Caco-2 (cell line): ENCODE measurements at regions of chr4 and their contacts with region 1.

Region 1: DNA sequence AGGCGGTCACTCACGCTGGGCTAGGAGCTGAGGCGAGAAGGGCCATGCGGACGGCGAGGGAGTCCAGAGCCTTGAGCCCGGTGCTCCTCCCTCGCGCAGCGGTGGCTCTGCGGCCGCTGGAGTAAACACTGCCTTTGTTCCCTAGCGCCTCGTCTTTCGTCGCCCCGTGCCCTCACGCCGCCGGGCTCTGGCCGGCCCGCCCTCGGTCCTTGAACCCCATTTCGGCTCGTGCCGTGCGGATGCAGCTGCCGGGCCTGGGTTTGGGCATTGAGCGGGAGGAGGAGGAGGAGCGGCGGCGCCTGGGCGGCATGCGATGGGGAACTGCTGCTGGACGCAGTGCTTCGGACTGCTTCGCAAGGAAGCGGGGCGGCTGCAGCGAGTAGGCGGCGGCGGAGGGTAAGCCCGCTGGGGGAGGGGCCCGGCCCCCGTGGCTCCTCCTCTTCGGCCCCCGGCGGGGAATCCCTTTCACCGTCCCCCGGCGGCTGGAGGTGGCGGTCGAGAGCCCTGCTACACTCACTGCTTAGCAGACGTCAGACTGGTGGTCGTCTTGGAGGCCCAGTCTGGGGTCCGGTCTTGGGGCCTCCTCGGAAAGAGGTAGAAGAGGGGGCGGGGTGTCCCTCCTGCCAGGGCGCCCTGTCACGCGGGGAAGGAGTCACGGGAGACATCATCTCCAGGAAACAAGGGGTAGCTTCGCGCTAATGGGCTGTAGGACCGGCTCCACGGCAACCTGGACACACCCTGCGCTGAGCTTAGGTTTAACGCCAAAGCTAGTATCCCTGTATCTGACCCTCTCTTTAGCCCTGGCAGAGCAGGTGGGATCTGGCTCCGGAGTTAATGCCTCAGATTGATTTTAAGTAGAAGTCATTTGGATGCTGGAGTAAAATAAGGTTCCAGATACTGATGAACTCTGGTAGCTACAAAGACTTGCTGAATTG is at the start of gene AP1AR:
- DNase-seq: peak; percentile 88 to 92
- H3K4me3 ChIP-seq: peak within 1 kb of the TSS; percentile 96
- H3K4me3 Mint-ChIP-seq: peak within 1 kb of the TSS; percentile 96
- H3K27ac Mint-ChIP-seq: peak within 1 kb of the TSS; percentile 96
- H3K4me1 ChIP-seq: peaks cover 12% of the 10 kb centered on the region; the same call in 1 of the 2 replicates
- H3K4me1 Mint-ChIP-seq: peaks cover 12% of the 10 kb centered on the region
- H3K27me3 ChIP-seq: no peaks in the 10 kb centered on the region
- H3K27me3 Mint-ChIP-seq: no peaks in the 10 kb centered on the region
- CTCF ChIP-seq: peak; percentile 36 to 56
- total RNA-seq, gene AP1AR: 19.1 and 24.0 TPM in 2 replicates

Region 2: DNA sequence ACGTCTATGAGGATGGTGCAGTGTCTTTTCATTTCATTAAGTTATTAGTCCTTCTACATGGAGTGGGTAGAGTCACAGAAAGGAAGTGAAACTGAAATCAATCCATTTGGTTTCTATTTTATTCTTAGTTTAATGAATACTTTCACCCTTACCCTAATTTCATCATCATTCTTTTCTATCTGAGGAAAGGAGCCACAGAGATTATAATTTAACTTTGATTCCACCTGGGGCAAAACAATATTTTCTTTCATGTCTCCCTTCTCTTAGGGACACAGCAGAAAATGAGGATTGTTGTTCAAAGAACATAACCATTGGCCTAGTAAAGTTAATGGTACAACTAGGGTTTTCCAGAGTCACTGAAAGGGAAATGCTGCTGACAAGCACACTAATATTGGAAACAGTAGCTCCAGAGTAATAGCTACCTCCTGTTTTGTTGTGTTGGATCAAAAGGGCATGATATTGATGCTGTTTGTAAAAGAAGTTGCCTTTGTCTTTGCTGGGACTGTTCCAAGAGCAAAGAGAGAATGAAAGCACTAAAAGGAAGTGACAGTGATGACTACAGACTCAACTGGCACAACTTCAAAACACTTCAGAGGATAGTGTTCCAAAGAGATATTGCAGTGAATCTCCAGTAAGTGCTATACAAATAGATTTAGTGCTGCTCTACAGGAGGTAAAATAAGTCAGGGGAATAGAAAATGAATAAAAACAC is 1362.0 kb before region 1 on chr4:
- CTCF ChIA-PET with region 1: no interaction called
- POLR2A ChIA-PET with region 1: no interaction called
- intact Hi-C with region 1: no loop called
- DNase-seq: no peak
- H3K4me3 ChIP-seq: no peak overlapping the region
- H3K4me3 Mint-ChIP-seq: no peak overlapping the region
- H3K27ac Mint-ChIP-seq: no peak overlapping the region
- H3K4me1 ChIP-seq: no peaks in the 10 kb centered on the region
- H3K4me1 Mint-ChIP-seq: peaks cover 10% of the 10 kb centered on the region
- H3K27me3 ChIP-seq: no peaks in the 10 kb centered on the region
- H3K27me3 Mint-ChIP-seq: no peaks in the 10 kb centered on the region
- CTCF ChIP-seq: no peak

Region 3: GRCh38 chr4:111930659-111931058 is 301.4 kb before region 1 on chr4:
- CTCF ChIA-PET with region 1: no interaction called
- POLR2A ChIA-PET with region 1: no interaction called
- intact Hi-C with region 1: no loop called
- DNase-seq: no peak
- H3K4me3 ChIP-seq: no peak overlapping the region
- H3K4me3 Mint-ChIP-seq: no peak overlapping the region
- H3K27ac Mint-ChIP-seq: no peak overlapping the region
- H3K4me1 ChIP-seq: no peaks in the 10 kb centered on the region
- H3K4me1 Mint-ChIP-seq: no peaks in the 10 kb centered on the region
- H3K27me3 ChIP-seq: no peaks in the 10 kb centered on the region
- H3K27me3 Mint-ChIP-seq: peaks cover 3% of the 10 kb centered on the region
- CTCF ChIP-seq: no peak

Region 4: GRCh38 chr4:112112590-112113136 is 119.4 kb before region 1 on chr4:
- CTCF ChIA-PET with region 1: no interaction called
- POLR2A ChIA-PET with region 1: no interaction called
- intact Hi-C with region 1: loop called (anchors 1 kb)
- DNase-seq: peak in 1 of 2 experiments; percentile 2
- H3K4me3 ChIP-seq: no peak overlapping the region
- H3K4me3 Mint-ChIP-seq: peak overlapping the region; percentile 65
- H3K27ac Mint-ChIP-seq: peak overlapping the region; percentile 68
- H3K4me1 ChIP-seq: peaks cover 28% of the 10 kb centered on the region
- H3K4me1 Mint-ChIP-seq: peaks cover 24% of the 10 kb centered on the region
- H3K27me3 ChIP-seq: no peaks in the 10 kb centered on the region
- H3K27me3 Mint-ChIP-seq: no peaks in the 10 kb centered on the region
- CTCF ChIP-seq: no peak

Region 5: GRCh38 chr4:112145326-112145819 is 86.7 kb before region 1 on chr4 and contains the start of gene FAM241A:
- CTCF ChIA-PET with region 1: no interaction called
- POLR2A ChIA-PET with region 1: no interaction called
- intact Hi-C with region 1: loop called (anchors 2 kb)
- DNase-seq: peak; percentile 80 to 85
- H3K4me3 ChIP-seq: peak within 1 kb of the TSS; percentile 72
- H3K4me3 Mint-ChIP-seq: peak within 1 kb of the TSS; percentile 82
- H3K27ac Mint-ChIP-seq: peak within 1 kb of the TSS; percentile 60
- H3K4me1 ChIP-seq: no peaks in the 10 kb centered on the region
- H3K4me1 Mint-ChIP-seq: peaks cover 18% of the 10 kb centered on the region
- H3K27me3 ChIP-seq: no peaks in the 10 kb centered on the region
- H3K27me3 Mint-ChIP-seq: no peaks in the 10 kb centered on the region
- CTCF ChIP-seq: no peak
- total RNA-seq, gene FAM241A: 1.0 and 1.1 TPM in 2 replicates

Region 6: DNA sequence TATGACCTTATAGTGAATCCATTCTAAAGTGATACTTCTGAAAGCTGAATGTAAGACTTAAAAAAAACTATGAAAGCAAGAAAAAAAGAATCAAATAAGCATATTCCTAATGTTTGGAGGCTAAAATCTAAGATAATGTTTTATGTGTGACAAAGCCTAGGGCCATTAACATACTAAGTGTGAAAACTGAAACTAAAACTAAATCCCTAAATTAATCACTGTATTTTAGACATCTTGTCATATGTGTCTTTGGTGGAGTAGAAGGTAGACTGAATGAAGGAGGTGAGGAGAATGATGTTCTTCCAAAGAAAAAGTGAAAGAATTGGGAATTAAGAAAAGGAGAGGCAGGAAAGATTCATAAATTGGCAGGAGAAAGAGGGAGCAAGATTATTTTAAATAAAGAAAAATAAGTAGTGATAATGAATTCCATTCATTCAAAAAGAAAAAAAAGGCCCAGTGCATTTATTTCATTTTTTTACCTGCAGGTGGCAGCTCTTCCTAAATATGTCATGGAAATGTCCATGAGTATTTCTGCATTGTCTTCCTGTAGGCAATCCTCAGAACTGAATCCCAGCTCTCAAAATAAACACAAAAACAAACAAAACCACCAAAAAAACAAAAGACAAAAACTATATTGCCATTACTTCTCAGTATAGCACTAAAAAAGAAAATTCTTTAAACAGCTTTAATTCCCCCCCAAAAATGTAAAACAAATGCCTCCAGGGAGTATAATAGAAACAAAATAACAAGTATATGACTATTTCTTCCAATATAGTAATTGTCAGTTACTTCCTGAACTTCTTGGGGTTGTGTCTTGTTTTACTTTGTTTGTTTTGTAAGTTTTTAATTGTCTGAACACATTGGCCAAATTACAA is 17.4 kb before region 1 on chr4:
- CTCF ChIA-PET with region 1: interaction called, 11 read pairs
- POLR2A ChIA-PET with region 1: interaction called, 6 read pairs
- intact Hi-C with region 1: loop called (anchors 1 kb)
- DNase-seq: peak in 1 of 2 experiments; percentile 35
- H3K4me3 ChIP-seq: no peak overlapping the region
- H3K4me3 Mint-ChIP-seq: no peak overlapping the region
- H3K27ac Mint-ChIP-seq: no peak overlapping the region
- H3K4me1 ChIP-seq: no peaks in the 10 kb centered on the region
- H3K4me1 Mint-ChIP-seq: no peaks in the 10 kb centered on the region
- H3K27me3 ChIP-seq: no peaks in the 10 kb centered on the region
- H3K27me3 Mint-ChIP-seq: no peaks in the 10 kb centered on the region
- CTCF ChIP-seq: peak; percentile 44 to 51

Region 7: DNA sequence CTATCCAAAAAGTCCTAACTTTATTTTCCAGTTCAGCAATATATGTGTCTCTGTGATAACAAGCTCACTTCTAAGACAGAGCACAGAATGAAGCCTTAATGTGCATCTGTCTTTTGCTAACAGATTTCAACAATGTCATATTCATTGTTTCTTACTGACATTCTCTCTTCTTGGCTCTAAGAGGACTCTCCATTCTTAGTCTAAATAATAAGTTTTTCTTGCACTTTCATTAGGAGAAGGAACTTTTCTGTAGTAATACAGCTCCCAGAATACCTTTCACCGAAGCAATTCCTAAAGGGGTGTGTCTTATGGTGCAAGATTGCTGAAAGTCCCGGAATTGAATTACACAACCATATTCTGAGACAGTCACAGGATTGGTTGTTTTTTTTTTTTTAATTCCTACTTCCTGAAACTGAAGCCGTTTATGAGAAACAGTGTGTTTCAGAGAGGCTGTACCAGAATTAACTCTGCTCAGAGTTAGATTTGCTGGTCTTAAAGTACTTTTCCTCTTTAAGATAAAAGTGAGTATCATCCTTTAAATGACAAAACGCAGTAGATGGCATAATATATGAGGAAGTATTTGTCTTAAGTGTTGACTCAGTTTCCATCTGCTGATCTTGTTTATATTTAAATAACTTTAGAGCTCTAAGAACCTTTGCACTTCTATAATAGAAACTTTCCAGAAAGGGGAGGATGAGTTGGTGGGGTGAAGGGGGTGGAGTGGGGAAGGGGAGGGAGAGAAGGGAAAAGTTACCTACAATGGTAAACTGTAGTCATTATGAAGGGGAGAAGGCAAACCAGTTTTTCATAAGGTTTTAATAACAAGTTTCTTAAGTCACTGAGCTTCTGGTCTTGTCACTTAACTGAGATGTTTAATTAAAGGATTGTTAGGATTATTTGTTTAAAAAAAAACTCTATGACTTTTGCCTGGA is 65.2 kb after region 1 on chr4 and contains the start of gene ALPK1:
- CTCF ChIA-PET with region 1: no interaction called
- POLR2A ChIA-PET with region 1: no interaction called
- intact Hi-C with region 1: loop called (anchors 1 kb)
- DNase-seq: peak in 1 of 2 experiments; percentile 59
- H3K4me3 ChIP-seq: peak within 1 kb of the TSS; percentile 11
- H3K4me3 Mint-ChIP-seq: peak within 1 kb of the TSS; percentile 69
- H3K27ac Mint-ChIP-seq: peak within 1 kb of the TSS; percentile 49
- H3K4me1 ChIP-seq: no peaks in the 10 kb centered on the region; the same call in 1 of the 2 replicates
- H3K4me1 Mint-ChIP-seq: no peaks in the 10 kb centered on the region
- H3K27me3 ChIP-seq: no peaks in the 10 kb centered on the region
- H3K27me3 Mint-ChIP-seq: no peaks in the 10 kb centered on the region
- CTCF ChIP-seq: no peak
- total RNA-seq, gene ALPK1: 4.9 and 6.9 TPM in 2 replicates

Region 8: DNA sequence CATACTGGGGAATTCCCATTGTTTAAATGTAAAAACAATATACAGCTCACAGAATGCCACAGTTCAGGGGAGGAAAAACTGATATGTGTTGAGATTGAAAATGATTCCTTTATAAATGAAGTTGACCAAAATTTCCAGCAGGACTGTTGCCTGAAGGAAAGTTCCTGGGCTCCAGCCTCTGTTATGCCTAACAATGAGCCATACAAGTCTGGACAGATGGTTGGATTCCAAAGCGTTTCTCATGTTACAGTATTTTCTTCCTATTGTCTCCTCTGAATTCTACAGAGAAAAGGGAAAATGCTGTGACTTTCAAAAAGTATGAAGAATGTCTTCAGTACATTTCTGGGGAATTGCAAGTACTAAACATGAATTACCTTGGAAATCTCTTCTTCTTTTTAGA is 138.4 kb after region 1 on chr4:
- CTCF ChIA-PET with region 1: no interaction called
- POLR2A ChIA-PET with region 1: no interaction called
- intact Hi-C with region 1: no loop called
- DNase-seq: no peak
- H3K4me3 ChIP-seq: no peak overlapping the region
- H3K4me3 Mint-ChIP-seq: no peak overlapping the region
- H3K27ac Mint-ChIP-seq: no peak overlapping the region
- H3K4me1 ChIP-seq: peaks cover 5% of the 10 kb centered on the region
- H3K4me1 Mint-ChIP-seq: peaks cover 7% of the 10 kb centered on the region
- H3K27me3 ChIP-seq: no peaks in the 10 kb centered on the region
- H3K27me3 Mint-ChIP-seq: no peaks in the 10 kb centered on the region
- CTCF ChIP-seq: no peak

Region 9: GRCh38 chr4:112418092-112418491 is 186.0 kb after region 1 on chr4:
- CTCF ChIA-PET with region 1: no interaction called
- POLR2A ChIA-PET with region 1: no interaction called
- intact Hi-C with region 1: no loop called
- DNase-seq: peak in 1 of 2 experiments; percentile 1
- H3K4me3 ChIP-seq: no peak overlapping the region
- H3K4me3 Mint-ChIP-seq: no peak overlapping the region
- H3K27ac Mint-ChIP-seq: no peak overlapping the region
- H3K4me1 ChIP-seq: no peaks in the 10 kb centered on the region
- H3K4me1 Mint-ChIP-seq: no peaks in the 10 kb centered on the region
- H3K27me3 ChIP-seq: no peaks in the 10 kb centered on the region
- H3K27me3 Mint-ChIP-seq: peaks cover 7% of the 10 kb centered on the region
- CTCF ChIP-seq: no peak